Ovary (tissue), 10 donors: ENCODE measurements at regions of chr6 and their contacts with region 1.

Region 1: GRCh38 chr6:148845464-148845863 is 98.6 kb downstream of the UST start:
- DNase-seq: no peak
- H3K4me3 ChIP-seq: no peak overlapping the region
- H3K27ac ChIP-seq: no peak overlapping the region
- H3K4me1 ChIP-seq: peaks cover 12% of the 10 kb centered on the region
- H3K27me3 ChIP-seq: no peaks in the 10 kb centered on the region
- CTCF ChIP-seq: no peak
- EP300 ChIP-seq: no peak
- POLR2A ChIP-seq: no peak

Region 2: DNA sequence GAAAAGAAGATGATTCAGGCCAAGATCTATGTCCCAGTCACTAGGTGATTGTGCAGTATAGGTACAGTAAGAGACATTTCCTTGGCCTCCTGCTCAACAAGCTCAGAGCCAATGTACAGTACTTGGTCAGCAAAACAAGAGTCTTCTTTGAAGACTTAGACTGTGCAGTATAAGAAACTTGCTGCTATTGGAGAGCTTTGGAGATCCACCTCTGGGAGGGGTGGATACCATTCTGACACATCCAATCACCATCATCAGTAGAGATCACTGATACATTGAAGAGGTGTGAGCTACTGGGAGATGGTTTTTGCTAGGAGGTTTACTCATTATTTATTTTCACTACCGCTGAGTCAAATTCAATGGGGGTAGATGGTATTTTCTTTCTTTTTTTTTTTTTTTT is 21.2 kb before region 1 on chr6:
- intact Hi-C with region 1: loop called in 1 of 4 experiments (anchors 2 kb)
- DNase-seq: no peak
- H3K4me3 ChIP-seq: no peak overlapping the region
- H3K27ac ChIP-seq: no peak overlapping the region
- H3K4me1 ChIP-seq: no peaks in the 10 kb centered on the region
- H3K27me3 ChIP-seq: no peaks in the 10 kb centered on the region
- CTCF ChIP-seq: no peak
- EP300 ChIP-seq: no peak
- POLR2A ChIP-seq: no peak